Left ventricle myocardium superior (tissue), 1 donor: ENCODE measurements at regions of chr22 and their contacts with region 1.

Region 1: GRCh38 chr22:40950962-40951794 is at the start of gene RBX1:
- DNase-seq: peak; percentile 98
- ATAC-seq: peak; percentile 95
- total RNA-seq, gene RBX1: 65.9 TPM

Region 2: GRCh38 chr22:40877488-40877887 is 73.7 kb before region 1 on chr22:
- intact Hi-C with region 1: no loop called
- DNase-seq: no peak
- ATAC-seq: no peak

Region 3: DNA sequence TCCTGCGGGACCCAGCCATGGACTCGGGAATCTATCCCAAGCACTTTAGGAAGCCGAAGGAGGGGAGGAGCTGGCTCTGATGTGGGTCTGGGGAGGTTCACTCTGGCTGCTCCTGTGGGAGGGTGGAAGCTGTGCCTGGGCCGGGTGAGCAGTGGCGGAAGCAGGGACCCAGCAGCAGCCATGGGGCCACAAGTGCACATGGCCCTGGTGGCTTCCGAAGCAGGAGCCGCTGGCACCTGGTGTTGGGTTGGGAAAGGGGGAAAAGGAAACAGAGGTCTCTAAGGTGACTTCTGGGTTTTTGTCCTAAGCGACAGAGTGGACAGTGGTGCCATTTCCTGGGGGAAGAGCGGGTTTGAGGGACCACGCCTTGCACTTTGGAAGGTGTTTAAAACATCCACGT is 39.3 kb after region 1 on chr22:
- intact Hi-C with region 1: no loop called
- DNase-seq: no peak
- ATAC-seq: no peak

Region 4: GRCh38 chr22:41091132-41092022 is 140.2 kb after region 1 on chr22:
- intact Hi-C with region 1: loop called (anchors 2 kb)
- DNase-seq: peak; percentile 100
- ATAC-seq: peak; percentile 96

Region 5: DNA sequence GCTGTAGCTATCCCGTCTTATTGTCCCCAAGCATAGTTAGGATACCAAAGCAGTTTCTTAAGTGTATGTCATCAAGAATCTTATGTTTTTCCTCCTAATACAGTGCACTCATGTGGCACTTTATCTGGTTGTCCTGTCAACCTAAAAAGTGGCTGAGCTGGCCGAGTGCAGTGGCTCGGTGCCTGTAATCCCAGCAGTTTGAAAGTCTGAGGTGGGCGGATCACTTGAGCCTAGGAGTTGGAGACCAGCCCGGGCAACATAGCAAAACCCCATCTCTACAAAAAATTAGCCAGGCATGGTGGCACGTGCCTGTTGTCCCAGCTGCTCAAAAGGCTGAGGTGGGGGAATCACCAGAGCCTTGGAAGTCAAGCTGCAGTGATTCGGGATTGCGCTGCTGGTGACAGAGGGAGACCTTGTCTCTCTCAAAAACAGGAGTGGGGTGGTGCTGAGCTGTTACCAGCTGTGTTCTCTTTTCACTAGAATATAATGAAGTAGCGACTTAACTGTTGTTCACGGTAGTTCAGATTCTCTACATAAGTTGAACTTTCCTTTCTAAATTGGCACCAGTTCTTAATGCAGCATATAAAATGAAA is 189.3 kb after region 1 on chr22:
- intact Hi-C with region 1: no loop called
- DNase-seq: no peak
- ATAC-seq: peak; percentile 76